ENCODE measurements at regions of chr18 and their contacts with region 1.

Region 1: GRCh38 chr18:22856870-22857269 is 76.3 kb upstream of the RBBP8 start:
- DNase-seq: no peak
- ATAC-seq: no peak
- H3K4me3 ChIP-seq: no peak overlapping the region
- H3K27ac ChIP-seq: no peak overlapping the region
- H3K4me1 ChIP-seq: no peaks in the 10 kb centered on the region
- H3K27me3 ChIP-seq: peaks cover 3% of the 10 kb centered on the region; the same call in 1 of the 2 replicates
- CTCF ChIP-seq: no peak
- POLR2A ChIP-seq: no peak
- RAD21 ChIP-seq: no peak

Region 2: GRCh38 chr18:22921772-22922171 is 64.9 kb after region 1 on chr18:
- CTCF ChIA-PET with region 1: no interaction called
- POLR2A ChIA-PET with region 1: no interaction called
- dilution Hi-C with region 1: no loop called
- in situ Hi-C with region 1: no loop called
- intact Hi-C with region 1: loop called (anchors 10 kb)
- DNase-seq: no peak
- ATAC-seq: no peak
- H3K4me3 ChIP-seq: no peak overlapping the region
- H3K27ac ChIP-seq: no peak overlapping the region
- H3K4me1 ChIP-seq: no peaks in the 10 kb centered on the region
- H3K27me3 ChIP-seq: no peaks in the 10 kb centered on the region
- CTCF ChIP-seq: no peak
- POLR2A ChIP-seq: no peak
- RAD21 ChIP-seq: no peak